Naive thymus-derived CD4-positive, alpha-beta T cell (primary cell): ENCODE measurements at regions of chr2 and their contacts with region 1.

Region 1: DNA sequence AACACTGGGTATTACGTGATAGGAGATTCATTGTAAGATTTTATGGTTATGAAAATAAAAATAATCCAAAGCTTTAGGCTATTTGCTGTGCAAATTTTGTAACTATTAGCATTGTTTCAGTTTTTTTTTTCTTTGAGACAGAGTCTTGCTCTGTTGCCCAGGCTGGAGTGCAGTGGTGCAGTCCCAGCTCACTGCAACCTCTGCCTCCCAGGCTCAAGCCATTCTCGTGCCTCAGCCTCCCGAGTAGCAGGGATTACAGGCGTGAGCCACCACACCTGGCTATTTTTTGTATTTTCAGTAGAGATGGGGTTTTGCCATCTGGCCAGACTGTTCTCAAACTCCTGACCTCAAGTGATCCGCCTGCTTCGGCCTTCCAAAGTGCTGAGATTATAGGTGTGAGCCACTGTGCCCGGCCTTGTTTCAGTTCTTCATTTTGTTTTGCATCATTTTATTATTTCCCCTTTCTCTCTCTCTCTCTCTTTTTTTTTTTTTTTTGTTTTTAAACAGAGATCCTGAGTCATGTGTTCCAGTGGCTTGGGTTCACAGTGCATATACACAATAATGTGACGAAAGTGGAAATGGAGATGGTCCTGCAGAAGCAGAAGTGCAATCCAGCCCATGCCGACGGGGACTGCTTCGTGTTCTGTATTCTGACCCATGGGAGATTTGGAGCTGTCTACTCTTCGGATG is 25.8 kb downstream of the CASP10 start:
- DNase-seq: no peak
- ATAC-seq: peak; percentile 75
- H3K4me3 ChIP-seq: no peak overlapping the region
- H3K4me3 Mint-ChIP-seq: no peak overlapping the region
- H3K27ac ChIP-seq: no peak overlapping the region
- H3K27ac Mint-ChIP-seq: peak overlapping the region in 7 of 9 donors; percentile 20 to 63 (median 31)
- H3K4me1 ChIP-seq: peaks cover 0 to 29% of the 10 kb centered on the region in 2 donors
- H3K4me1 Mint-ChIP-seq: peaks cover 18 to 62% (median 33%) of the 10 kb centered on the region in 7 donors
- H3K27me3 ChIP-seq: no peaks in the 10 kb centered on the region
- H3K27me3 Mint-ChIP-seq: no peaks in the 10 kb centered on the region

Region 2: DNA sequence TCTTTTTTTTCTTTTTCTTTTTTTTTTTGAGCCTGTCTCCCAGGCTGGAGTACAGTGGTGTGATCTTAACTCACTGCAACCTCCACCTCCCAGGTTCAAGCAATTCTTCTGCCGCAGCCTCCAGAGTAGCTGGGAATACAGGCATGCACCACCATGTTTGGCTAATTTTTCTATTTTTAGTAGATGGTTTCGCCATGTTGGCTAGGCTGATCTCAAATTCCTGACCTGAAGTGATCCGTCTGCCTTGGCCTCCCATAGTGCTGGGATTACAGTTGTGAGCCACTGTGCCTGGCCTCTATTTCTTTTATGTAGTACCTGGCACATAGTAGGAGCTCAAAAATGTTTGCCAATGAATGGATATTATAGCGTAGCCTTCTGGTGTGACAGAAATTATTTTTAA is 99.5 kb before region 1 on chr2:
- CTCF ChIA-PET with region 1: no interaction called
- POLR2A ChIA-PET with region 1: no interaction called
- intact Hi-C with region 1: no loop called
- DNase-seq: no peak
- ATAC-seq: no peak
- H3K4me3 ChIP-seq: no peak overlapping the region
- H3K4me3 Mint-ChIP-seq: no peak overlapping the region
- H3K27ac ChIP-seq: no peak overlapping the region
- H3K27ac Mint-ChIP-seq: no peak overlapping the region
- H3K4me1 ChIP-seq: no peaks in the 10 kb centered on the region
- H3K4me1 Mint-ChIP-seq: peaks cover 5 to 17% (median 9%) of the 10 kb centered on the region in 7 donors
- H3K27me3 ChIP-seq: no peaks in the 10 kb centered on the region
- H3K27me3 Mint-ChIP-seq: no peaks in the 10 kb centered on the region

Region 3: GRCh38 chr2:201194097-201194496 is 14.6 kb before region 1 on chr2:
- CTCF ChIA-PET with region 1: interaction called, 4 read pairs
- POLR2A ChIA-PET with region 1: interaction called, 6 read pairs
- intact Hi-C with region 1: loop called in 1 of 2 experiments (anchors 1 kb)
- DNase-seq: peak in 7 of 9 donors; percentile 20 to 49 (median 38)
- ATAC-seq: peak; percentile 66
- H3K4me3 ChIP-seq: peak overlapping the region; percentile 18
- H3K4me3 Mint-ChIP-seq: peak overlapping the region; percentile 48 to 98 (median 78)
- H3K27ac ChIP-seq: peak overlapping the region; percentile 62
- H3K27ac Mint-ChIP-seq: peak overlapping the region; percentile 78 to 96 (median 91)
- H3K4me1 ChIP-seq: peaks cover 39 to 73% of the 10 kb centered on the region in 2 donors
- H3K4me1 Mint-ChIP-seq: peaks cover 44 to 88% (median 72%) of the 10 kb centered on the region in 7 donors
- H3K27me3 ChIP-seq: no peaks in the 10 kb centered on the region
- H3K27me3 Mint-ChIP-seq: no peaks in the 10 kb centered on the region

Region 4: GRCh38 chr2:201220102-201220570 is 11.4 kb after region 1 on chr2:
- CTCF ChIA-PET with region 1: no interaction called
- POLR2A ChIA-PET with region 1: interaction called, 3 read pairs
- intact Hi-C with region 1: loop called in 1 of 2 experiments (anchors 1 kb)
- DNase-seq: no peak
- ATAC-seq: no peak
- H3K4me3 ChIP-seq: no peak overlapping the region
- H3K4me3 Mint-ChIP-seq: peak overlapping the region; percentile 6 to 77 (median 42)
- H3K27ac ChIP-seq: peak overlapping the region; percentile 62
- H3K27ac Mint-ChIP-seq: peak overlapping the region; percentile 61 to 97 (median 90)
- H3K4me1 ChIP-seq: peaks cover 0 to 44% of the 10 kb centered on the region in 2 donors
- H3K4me1 Mint-ChIP-seq: peaks cover 28 to 78% (median 71%) of the 10 kb centered on the region in 7 donors
- H3K27me3 ChIP-seq: no peaks in the 10 kb centered on the region
- H3K27me3 Mint-ChIP-seq: no peaks in the 10 kb centered on the region

Region 5: DNA sequence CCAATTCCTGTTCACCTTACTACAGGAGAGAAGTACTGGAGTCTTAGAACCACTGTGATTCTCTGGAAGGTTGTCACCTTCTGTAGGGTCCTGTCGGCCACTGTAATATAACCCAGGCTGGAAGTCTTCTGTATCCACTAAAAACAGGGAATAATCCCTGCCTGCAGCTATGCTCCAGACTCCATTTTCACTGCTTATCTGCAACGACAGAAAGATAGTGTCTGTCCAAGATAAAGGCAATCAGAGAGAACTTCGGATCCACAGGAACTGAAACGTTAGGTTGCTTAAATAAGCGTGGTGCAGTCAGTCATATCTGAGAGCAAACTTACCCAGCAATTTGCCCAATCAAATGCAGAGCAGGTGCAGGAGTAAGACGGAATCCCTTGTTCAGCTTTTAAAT is 537.8 kb after region 1 on chr2:
- CTCF ChIA-PET with region 1: no interaction called
- POLR2A ChIA-PET with region 1: no interaction called
- intact Hi-C with region 1: no loop called
- DNase-seq: no peak
- ATAC-seq: no peak
- H3K4me3 ChIP-seq: no peak overlapping the region
- H3K4me3 Mint-ChIP-seq: no peak overlapping the region
- H3K27ac ChIP-seq: no peak overlapping the region
- H3K27ac Mint-ChIP-seq: no peak overlapping the region
- H3K4me1 ChIP-seq: no peaks in the 10 kb centered on the region
- H3K4me1 Mint-ChIP-seq: peaks cover 0 to 1% (median 0%) of the 10 kb centered on the region in 7 donors
- H3K27me3 ChIP-seq: no peaks in the 10 kb centered on the region
- H3K27me3 Mint-ChIP-seq: no peaks in the 10 kb centered on the region

Region 6: DNA sequence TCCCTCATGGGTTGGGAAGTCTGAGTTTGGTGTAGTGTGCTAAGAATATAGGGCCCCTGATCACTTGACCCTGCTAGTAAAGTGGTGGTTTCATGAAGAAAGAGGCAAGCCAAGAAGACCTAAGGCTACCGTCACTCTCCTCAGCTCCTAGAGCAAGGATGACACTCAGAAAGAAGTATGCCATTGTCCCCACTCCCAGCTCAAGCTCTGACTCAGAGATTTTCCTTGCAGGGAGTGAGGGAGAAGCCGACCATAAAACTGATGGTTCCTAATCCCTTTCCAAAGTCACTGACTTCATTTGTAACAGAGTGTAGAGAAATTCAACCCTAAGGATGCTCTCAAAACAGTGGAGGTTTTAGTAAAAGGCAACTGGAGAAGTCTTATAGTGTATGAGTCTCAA is 1582.0 kb after region 1 on chr2:
- CTCF ChIA-PET with region 1: no interaction called
- POLR2A ChIA-PET with region 1: no interaction called
- intact Hi-C with region 1: no loop called
- DNase-seq: no peak
- ATAC-seq: no peak
- H3K4me3 ChIP-seq: no peak overlapping the region
- H3K4me3 Mint-ChIP-seq: no peak overlapping the region
- H3K27ac ChIP-seq: no peak overlapping the region
- H3K27ac Mint-ChIP-seq: no peak overlapping the region
- H3K4me1 ChIP-seq: no peaks in the 10 kb centered on the region
- H3K4me1 Mint-ChIP-seq: peaks cover 0 to 14% (median 0%) of the 10 kb centered on the region in 7 donors
- H3K27me3 ChIP-seq: no peaks in the 10 kb centered on the region
- H3K27me3 Mint-ChIP-seq: no peaks in the 10 kb centered on the region